SK-N-SH (cell line): ENCODE measurements at regions of chr2 and their contacts with region 1.

Region 1: DNA sequence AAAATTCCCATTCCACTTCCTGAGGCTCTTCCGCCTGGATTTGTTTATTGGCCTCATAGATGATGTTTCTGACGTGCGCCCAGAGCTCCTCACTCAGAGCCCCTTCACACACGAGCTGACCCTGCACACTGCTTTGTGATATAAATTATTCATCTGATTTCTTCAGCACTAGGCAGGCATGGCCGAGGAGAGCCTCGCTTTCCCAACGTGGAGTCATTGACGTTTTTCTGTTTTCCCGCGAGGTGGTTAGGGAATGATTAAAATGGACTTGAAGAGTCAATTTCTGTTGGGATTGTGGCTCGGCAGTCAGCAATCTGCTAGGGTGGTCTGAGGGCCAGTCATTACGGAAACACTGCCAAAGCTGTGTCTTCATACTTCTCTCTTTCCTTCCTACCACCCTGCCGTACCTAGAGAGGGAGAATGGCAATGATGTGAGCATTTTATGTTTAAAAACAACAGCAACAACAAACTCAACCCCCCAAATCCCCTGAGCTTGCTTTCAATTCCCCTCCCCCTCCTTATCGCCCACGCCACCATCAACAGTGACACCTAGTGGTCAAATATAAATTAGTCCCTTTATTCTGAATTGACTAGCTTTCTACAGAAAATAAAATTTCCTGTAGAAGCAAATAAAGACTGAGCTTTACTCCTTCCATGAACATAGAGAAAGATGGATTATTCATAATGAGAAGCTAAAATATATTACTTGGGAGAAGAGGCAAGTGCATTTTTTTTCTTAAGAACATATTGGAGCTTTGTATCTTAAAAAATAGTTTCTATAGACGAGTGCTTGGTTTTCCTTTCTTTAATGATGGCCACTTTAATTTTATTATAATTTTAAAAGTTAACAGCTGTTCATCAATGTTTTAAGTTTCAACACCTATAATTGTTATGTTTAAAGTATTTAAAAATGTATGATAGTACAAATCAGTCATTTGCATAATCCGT is 285.1 kb downstream of the MTX2 start:
- DNase-seq: peak; percentile 83
- H3K4me3 ChIP-seq: peak overlapping the region; percentile 16 to 39
- H3K27ac ChIP-seq: peak overlapping the region; percentile 10 to 94; a peak in 3 of 4 replicates
- H3K4me1 ChIP-seq: peaks cover 8 to 22% of the 10 kb centered on the region in 2 experiments; a peak in 3 of 4 replicates
- H3K27me3 ChIP-seq: no peaks in the 10 kb centered on the region
- CTCF ChIP-seq: peak; percentile 79
- EP300 ChIP-seq: peak in 1 of 2 experiments; percentile 40; a peak in 1 of 4 replicates
- RAD21 ChIP-seq: peak; percentile 89

Region 2: DNA sequence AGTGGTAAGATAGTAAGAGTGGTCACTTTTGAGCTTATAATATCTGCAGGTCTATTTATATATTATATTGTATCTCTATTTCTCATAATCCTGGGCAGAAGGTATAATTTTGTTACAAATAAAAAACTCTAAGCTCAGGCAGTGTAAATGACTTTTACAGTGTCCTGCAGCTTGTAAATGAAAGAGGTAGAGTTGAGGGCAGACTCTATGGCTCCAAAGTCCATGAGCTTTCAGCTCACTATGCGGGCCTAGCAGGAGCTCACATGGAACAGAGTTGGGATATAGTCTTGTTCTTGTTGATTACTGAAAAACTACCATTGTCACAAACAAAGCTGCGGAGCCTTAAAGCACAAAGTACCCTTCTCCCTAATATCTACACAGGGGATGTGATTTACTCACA is 913.7 kb before region 1 on chr2:
- CTCF ChIA-PET with region 1: no interaction called
- POLR2A ChIA-PET with region 1: no interaction called
- DNase-seq: no peak
- H3K4me3 ChIP-seq: no peak overlapping the region
- H3K27ac ChIP-seq: no peak overlapping the region
- H3K4me1 ChIP-seq: no peaks in the 10 kb centered on the region
- H3K27me3 ChIP-seq: no peaks in the 10 kb centered on the region
- CTCF ChIP-seq: no peak
- EP300 ChIP-seq: no peak
- RAD21 ChIP-seq: no peak

Region 3: DNA sequence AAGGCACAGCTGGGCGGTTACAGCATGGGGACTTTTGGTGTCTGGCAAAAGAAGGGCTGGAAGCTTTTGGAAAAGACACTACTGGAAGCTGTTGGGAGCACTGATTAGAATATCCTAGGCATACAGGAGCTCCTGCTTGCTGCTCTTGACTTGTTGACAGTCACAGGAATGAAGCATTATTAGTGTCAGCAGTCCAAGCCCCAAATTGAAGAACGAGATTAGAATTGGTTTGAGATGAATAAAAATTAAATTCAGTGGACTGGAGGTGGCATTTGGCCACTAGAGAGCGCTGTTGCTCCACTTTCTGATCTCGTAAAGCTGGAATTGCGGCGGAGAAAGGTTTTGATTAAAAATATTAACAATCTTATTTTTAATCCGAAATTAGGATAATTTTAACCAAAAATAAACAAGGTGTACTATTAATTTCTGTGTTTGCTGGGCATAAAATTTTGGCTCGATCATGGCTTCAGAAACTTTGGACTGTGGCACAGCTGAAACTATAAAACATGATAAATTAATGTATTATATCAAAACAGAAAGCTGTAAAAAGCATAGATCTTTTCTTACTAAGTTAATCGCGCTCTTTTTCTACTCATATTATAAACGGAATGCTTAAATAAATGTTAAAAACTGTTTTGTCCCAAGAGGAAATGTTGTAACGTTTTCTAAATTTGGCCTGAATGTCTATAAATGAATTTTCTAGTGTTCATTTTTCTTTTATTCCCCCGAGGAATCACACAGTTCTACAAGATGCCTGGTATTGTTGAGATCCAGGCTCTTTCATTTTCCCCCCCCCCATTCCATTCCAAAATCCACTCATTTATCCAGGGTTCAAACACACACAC is 427.2 kb before region 1 on chr2:
- CTCF ChIA-PET with region 1: interaction called, 111 read pairs
- POLR2A ChIA-PET with region 1: interaction called, 7 read pairs
- DNase-seq: peak; percentile 63
- H3K4me3 ChIP-seq: peak overlapping the region; percentile 19 to 25; a peak in 1 of 4 replicates
- H3K27ac ChIP-seq: no peak overlapping the region; a peak in 1 of 4 replicates
- H3K4me1 ChIP-seq: peaks cover 4 to 20% of the 10 kb centered on the region in 2 experiments; a peak in 3 of 4 replicates
- H3K27me3 ChIP-seq: no peaks in the 10 kb centered on the region; the same call in 1 of the 2 replicates
- CTCF ChIP-seq: peak; percentile 97
- EP300 ChIP-seq: no peak; a peak in 1 of 4 replicates
- RAD21 ChIP-seq: peak; percentile 94

Region 4: GRCh38 chr2:176454893-176455811 is 99.2 kb before region 1 on chr2:
- CTCF ChIA-PET with region 1: interaction called, 58 read pairs
- POLR2A ChIA-PET with region 1: interaction called, 10 read pairs
- DNase-seq: peak; percentile 64
- H3K4me3 ChIP-seq: no peak overlapping the region; a peak in 1 of 4 replicates
- H3K27ac ChIP-seq: peak overlapping the region in 1 of 2 experiments; percentile 78; a peak in 2 of 4 replicates
- H3K4me1 ChIP-seq: peaks cover 0 to 16% of the 10 kb centered on the region in 2 experiments; a peak in 2 of 4 replicates
- H3K27me3 ChIP-seq: no peaks in the 10 kb centered on the region
- CTCF ChIP-seq: peak; percentile 94
- EP300 ChIP-seq: no peak
- RAD21 ChIP-seq: peak; percentile 88

Region 5: DNA sequence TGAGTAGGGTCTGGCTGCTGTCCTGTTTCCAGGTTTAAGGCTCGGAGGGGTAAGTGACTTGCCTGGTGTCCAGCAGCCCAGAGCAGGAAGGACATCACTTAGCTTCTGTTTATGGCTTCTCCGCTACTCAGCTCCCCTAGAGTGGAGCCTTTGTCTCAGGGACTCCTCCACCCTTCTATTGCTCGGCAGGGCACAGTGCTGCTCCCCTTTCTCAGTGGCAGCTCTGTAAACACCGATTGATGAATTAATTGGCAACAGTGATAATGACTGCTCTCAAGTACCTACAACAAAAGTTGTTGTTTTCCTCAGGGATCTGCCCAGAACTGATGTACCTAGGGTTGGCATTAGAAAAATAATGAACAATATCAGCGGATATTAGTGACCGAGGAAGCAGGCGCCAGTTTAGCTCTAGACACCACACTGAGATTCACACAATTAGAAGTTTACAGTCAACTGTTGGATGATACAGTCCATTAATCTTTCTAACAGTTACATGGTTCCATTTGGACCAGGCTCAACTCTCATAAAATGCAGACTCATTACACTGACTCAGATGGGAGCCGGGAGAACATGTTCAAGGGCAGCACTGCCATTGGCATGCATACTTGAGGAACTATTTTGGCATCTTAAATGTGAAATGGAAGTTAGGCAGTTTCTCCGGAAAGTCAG is 19.4 kb before region 1 on chr2:
- CTCF ChIA-PET with region 1: interaction called, 10 read pairs
- POLR2A ChIA-PET with region 1: no interaction called
- DNase-seq: no peak
- H3K4me3 ChIP-seq: no peak overlapping the region
- H3K27ac ChIP-seq: no peak overlapping the region
- H3K4me1 ChIP-seq: peaks cover 0 to 12% of the 10 kb centered on the region in 2 experiments; a peak in 3 of 4 replicates
- H3K27me3 ChIP-seq: no peaks in the 10 kb centered on the region
- CTCF ChIP-seq: no peak
- EP300 ChIP-seq: no peak
- RAD21 ChIP-seq: no peak

Region 6: DNA sequence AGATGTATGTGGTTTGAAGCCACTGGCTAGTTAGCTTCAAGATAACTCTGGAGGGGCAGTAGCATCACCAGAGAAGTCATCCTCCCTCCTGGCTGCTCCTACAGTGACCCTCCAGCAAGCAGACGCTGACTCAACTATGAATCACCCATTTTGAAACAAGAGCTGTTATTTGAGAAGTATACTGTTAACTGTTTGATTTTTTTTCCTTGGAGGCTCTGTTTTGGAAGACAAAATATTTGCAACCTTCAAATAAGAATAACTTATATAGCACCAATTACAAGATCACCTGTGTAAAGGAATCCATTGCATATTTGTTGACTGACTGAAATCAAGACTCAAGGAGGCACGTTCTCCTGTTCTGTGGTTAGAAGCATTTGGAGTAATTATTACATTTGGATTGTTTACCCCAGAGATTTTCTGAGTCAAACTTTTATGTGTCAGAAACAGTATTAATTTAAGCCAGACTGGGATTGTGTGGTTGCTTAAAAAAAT is 28.7 kb after region 1 on chr2:
- CTCF ChIA-PET with region 1: interaction called, 10 read pairs
- POLR2A ChIA-PET with region 1: no interaction called
- DNase-seq: no peak
- H3K4me3 ChIP-seq: no peak overlapping the region; a peak in 1 of 4 replicates
- H3K27ac ChIP-seq: peak overlapping the region; percentile 68 to 84
- H3K4me1 ChIP-seq: peaks cover 21 to 23% of the 10 kb centered on the region in 2 experiments; a peak in 3 of 4 replicates
- H3K27me3 ChIP-seq: no peaks in the 10 kb centered on the region
- CTCF ChIP-seq: no peak
- EP300 ChIP-seq: peak in 1 of 2 experiments; percentile 76; a peak in 2 of 4 replicates
- RAD21 ChIP-seq: no peak

Region 7: DNA sequence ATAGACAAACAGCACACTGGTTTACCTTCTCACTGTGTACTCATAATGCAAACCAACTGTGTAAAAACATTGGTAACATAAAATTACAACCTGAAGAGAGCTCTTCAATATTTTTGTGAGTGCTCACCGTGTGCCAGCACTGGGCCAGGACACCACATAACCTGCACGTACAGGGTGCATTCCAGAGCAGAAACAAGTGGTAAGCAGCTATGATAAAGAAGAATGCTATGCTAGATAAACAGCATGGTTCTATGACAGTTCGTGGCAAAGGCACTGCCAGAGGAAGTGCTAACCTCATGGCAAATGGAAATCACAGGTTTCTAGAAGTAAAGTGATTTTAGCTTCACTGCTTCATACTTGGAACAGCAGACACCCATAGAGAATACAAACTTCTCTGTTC is 58.4 kb after region 1 on chr2:
- CTCF ChIA-PET with region 1: no interaction called
- POLR2A ChIA-PET with region 1: no interaction called
- DNase-seq: no peak
- H3K4me3 ChIP-seq: no peak overlapping the region
- H3K27ac ChIP-seq: peak overlapping the region; percentile 3 to 75; a peak in 3 of 4 replicates
- H3K4me1 ChIP-seq: peaks cover 20 to 31% of the 10 kb centered on the region in 2 experiments; a peak in 3 of 4 replicates
- H3K27me3 ChIP-seq: no peaks in the 10 kb centered on the region
- CTCF ChIP-seq: no peak
- EP300 ChIP-seq: no peak; a peak in 1 of 4 replicates
- RAD21 ChIP-seq: no peak

Region 8: DNA sequence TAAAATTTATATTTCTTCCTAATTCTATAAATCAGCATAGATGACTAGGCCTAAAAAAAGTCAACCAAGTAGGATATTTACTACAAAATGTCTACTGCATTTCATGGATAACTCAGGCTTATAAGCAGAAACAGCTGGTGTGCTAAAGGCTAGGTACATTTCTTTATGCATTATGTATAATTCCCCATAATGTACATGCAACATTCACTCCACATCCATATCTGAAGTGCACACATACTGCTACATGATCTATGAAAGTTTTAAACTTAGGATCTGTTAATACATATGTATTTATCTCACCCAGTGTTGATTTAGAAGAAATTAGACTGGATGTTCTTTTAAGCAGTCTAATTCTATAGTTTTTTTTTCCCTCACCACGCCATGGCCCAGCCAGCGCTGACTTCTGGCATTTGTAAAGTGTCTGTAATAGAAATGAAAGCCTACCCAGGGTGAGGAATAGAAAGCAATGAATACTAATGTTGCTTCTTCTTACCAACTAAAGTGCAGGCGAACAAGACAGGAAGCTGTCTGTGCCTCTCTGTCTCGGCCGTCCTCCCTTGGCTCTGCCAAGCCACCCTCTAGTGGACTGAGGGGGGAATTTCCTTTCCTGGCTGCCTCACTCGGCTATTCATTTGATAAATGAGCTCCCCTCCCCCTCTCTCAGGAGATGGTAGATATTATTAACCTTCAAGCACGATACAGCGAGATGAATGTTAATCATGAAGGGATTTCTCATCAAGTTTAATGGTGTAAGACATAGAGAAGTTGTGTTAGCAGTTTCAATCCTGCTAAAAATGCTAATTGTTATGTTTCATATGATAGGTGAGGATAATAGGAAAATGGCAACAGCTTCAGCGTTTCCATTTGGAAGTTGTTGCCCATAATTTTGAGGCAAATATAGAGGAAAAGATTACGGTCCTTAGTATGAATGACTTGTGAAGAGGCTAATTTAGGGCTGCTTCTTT is 99.4 kb after region 1 on chr2:
- CTCF ChIA-PET with region 1: interaction called, 21 read pairs
- POLR2A ChIA-PET with region 1: interaction called, 3 read pairs
- DNase-seq: peak; percentile 61
- H3K4me3 ChIP-seq: peak overlapping the region in 1 of 2 experiments; percentile 18; a peak in 1 of 4 replicates
- H3K27ac ChIP-seq: peak overlapping the region; percentile 25 to 80; a peak in 3 of 4 replicates
- H3K4me1 ChIP-seq: peaks cover 8 to 41% of the 10 kb centered on the region in 2 experiments; a peak in 3 of 4 replicates
- H3K27me3 ChIP-seq: no peaks in the 10 kb centered on the region
- CTCF ChIP-seq: peak; percentile 75
- EP300 ChIP-seq: no peak
- RAD21 ChIP-seq: peak; percentile 76